ENCODE measurements at regions of chr22 and their contacts with region 1.

Region 1: DNA sequence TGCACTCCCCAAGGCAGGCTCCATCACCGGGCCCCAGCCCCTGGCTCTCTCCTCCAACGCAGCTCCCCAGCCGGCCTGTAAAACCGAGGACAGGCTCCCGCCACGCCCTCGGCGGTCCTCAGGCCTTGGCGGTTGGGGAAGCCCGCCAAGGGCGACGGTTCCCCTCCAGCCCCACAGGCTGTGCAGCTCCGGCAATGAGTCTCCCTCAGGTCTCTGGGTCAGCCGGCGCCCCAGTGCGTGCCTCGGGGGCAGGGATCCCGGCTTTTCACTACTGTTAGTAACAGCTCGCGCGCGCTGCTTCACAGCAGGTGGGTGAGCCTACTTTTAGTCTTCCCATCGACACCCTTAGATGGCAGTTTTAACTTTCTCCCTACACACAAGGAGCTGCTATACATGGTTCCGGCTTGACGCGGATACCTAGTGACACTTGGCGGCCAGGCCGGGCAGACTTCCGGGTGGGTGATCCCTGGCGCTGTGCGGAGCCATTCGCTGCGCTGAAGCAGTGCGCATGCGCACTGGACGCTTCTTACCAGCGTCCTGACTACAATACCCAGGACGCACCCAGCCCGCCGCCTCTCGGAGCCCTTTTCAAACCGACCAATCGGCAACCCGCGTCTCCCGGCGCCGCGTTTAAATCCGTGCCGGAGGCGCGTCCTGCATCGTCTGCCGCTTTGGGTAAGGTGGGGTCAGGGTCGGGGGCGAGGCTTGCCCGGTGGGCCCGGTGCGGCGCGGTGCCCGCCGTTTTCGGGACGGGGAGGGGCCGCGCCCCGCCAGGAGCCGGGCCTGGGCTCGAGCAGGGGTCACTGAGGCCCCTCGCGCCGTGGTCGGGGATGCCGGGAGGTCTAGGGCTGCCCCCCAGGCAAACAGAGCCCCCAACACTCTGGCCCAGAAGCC is at the start of gene GTSE1:
- DNase-seq: peak; percentile 98
- ATAC-seq: peak; percentile 97
- H3K4me3 Mint-ChIP-seq: peak within 1 kb of the TSS; percentile 92
- H3K27ac Mint-ChIP-seq: peak within 1 kb of the TSS; percentile 73
- H3K4me1 Mint-ChIP-seq: peaks cover 27% of the 10 kb centered on the region
- H3K27me3 Mint-ChIP-seq: no peaks in the 10 kb centered on the region; the same call in 1 of the 2 replicates
- CTCF ChIP-seq: no peak
- total RNA-seq, gene GTSE1: 45.4 to 56.1 TPM (median 45.4 TPM) in 3 replicates

Region 2: GRCh38 chr22:46312056-46312455 is 15.6 kb after region 1 on chr22:
- CTCF ChIA-PET with region 1: interaction called, 10 read pairs
- POLR2A ChIA-PET with region 1: no interaction called
- DNase-seq: no peak
- ATAC-seq: no peak
- H3K4me3 Mint-ChIP-seq: no peak overlapping the region
- H3K27ac Mint-ChIP-seq: no peak overlapping the region; the same call in 1 of the 2 replicates
- H3K4me1 Mint-ChIP-seq: no peaks in the 10 kb centered on the region
- H3K27me3 Mint-ChIP-seq: no peaks in the 10 kb centered on the region
- CTCF ChIP-seq: no peak

Measured in WTC11 (cell line).